ENCODE measurements at regions of chr3 and their contacts with region 1.

Region 1: GRCh38 chr3:172332256-172333041 is 115.8 kb downstream of the GHSR start:
- DNase-seq: peak; percentile 77
- H3K4me3 Mint-ChIP-seq: no peak overlapping the region
- H3K27ac Mint-ChIP-seq: no peak overlapping the region
- H3K4me1 Mint-ChIP-seq: no peaks in the 10 kb centered on the region
- H3K27me3 Mint-ChIP-seq: no peaks in the 10 kb centered on the region
- CTCF ChIP-seq: peak; percentile 83

Region 2: GRCh38 chr3:172201136-172201869 is 131.1 kb before region 1 on chr3:
- CTCF ChIA-PET with region 1: interaction called, 11 read pairs
- POLR2A ChIA-PET with region 1: no interaction called
- intact Hi-C with region 1: no loop called
- DNase-seq: peak; percentile 70
- H3K4me3 Mint-ChIP-seq: peak overlapping the region; percentile 50
- H3K27ac Mint-ChIP-seq: peak overlapping the region; percentile 89
- H3K4me1 Mint-ChIP-seq: peaks cover 39% of the 10 kb centered on the region
- H3K27me3 Mint-ChIP-seq: no peaks in the 10 kb centered on the region
- CTCF ChIP-seq: no peak

Region 3: DNA sequence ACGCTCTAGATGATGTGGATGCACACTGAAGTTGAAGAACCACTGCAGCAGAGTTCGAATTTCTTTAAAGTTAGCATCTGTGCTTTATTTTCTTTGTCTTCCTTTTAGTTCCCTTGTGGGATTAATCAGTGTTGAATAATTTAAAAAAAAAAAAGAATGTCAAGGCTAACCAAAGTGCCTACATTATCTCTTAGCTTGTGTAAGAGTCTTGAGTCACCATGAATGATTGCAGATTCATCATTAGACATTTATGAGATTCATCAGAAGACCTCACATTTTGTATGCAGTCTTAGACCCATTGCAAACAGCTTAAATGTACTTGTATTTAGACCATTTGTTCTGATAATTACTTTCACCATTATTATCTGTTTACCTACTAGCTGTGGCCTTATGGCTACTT is 110.9 kb before region 1 on chr3:
- CTCF ChIA-PET with region 1: interaction called, 15 read pairs
- POLR2A ChIA-PET with region 1: interaction called, 3 read pairs
- intact Hi-C with region 1: no loop called
- DNase-seq: peak; percentile 44
- H3K4me3 Mint-ChIP-seq: no peak overlapping the region
- H3K27ac Mint-ChIP-seq: no peak overlapping the region
- H3K4me1 Mint-ChIP-seq: peaks cover 39% of the 10 kb centered on the region
- H3K27me3 Mint-ChIP-seq: no peaks in the 10 kb centered on the region
- CTCF ChIP-seq: no peak

Region 4: GRCh38 chr3:172305552-172305951 is 26.9 kb before region 1 on chr3:
- CTCF ChIA-PET with region 1: interaction called, 19 read pairs
- POLR2A ChIA-PET with region 1: interaction called, 3 read pairs
- intact Hi-C with region 1: no loop called
- DNase-seq: peak; percentile 86
- H3K4me3 Mint-ChIP-seq: no peak overlapping the region
- H3K27ac Mint-ChIP-seq: peak overlapping the region; percentile 59
- H3K4me1 Mint-ChIP-seq: peaks cover 32% of the 10 kb centered on the region
- H3K27me3 Mint-ChIP-seq: no peaks in the 10 kb centered on the region
- CTCF ChIP-seq: no peak

Region 5: DNA sequence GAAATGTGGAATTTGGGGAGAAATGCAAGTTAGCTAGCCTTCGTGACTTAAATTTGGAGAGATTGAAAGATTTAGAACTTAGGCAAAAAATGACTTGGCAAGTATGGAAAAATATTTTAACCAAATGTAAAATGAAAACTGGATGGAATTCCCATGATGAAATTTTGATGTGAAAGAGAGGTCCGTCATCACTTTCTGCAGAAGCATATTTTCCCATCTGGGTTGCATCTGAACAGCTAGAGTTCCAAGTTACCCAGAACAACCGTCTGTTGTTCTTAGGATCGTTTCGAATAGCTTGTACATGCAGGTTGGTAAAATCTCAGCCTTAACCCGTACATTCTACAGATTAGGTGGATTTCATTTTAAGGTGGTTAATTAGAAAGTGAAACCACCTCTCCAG is 20.4 kb before region 1 on chr3:
- CTCF ChIA-PET with region 1: interaction called, 19 read pairs
- POLR2A ChIA-PET with region 1: interaction called, 3 read pairs
- intact Hi-C with region 1: no loop called
- DNase-seq: no peak
- H3K4me3 Mint-ChIP-seq: no peak overlapping the region
- H3K27ac Mint-ChIP-seq: no peak overlapping the region
- H3K4me1 Mint-ChIP-seq: peaks cover 21% of the 10 kb centered on the region
- H3K27me3 Mint-ChIP-seq: no peaks in the 10 kb centered on the region
- CTCF ChIP-seq: no peak

Region 6: GRCh38 chr3:172317984-172318383 is 14.5 kb before region 1 on chr3:
- CTCF ChIA-PET with region 1: interaction called, 31 read pairs
- POLR2A ChIA-PET with region 1: interaction called, 6 read pairs
- intact Hi-C with region 1: no loop called
- DNase-seq: peak; percentile 79
- H3K4me3 Mint-ChIP-seq: peak overlapping the region; percentile 1
- H3K27ac Mint-ChIP-seq: peak overlapping the region; percentile 83
- H3K4me1 Mint-ChIP-seq: peaks cover 28% of the 10 kb centered on the region
- H3K27me3 Mint-ChIP-seq: no peaks in the 10 kb centered on the region
- CTCF ChIP-seq: no peak

Measured in MCF 10A (cell line).